Ascending aorta (tissue), 2 donors: ENCODE measurements at regions of chr6 and their contacts with region 1.

Region 1: GRCh38 chr6:3068329-3069214 is at the start of gene RIPK1:
- DNase-seq: peak; percentile 74 to 95
- H3K4me3 ChIP-seq: peak within 1 kb of the TSS; percentile 77 to 85
- H3K27ac ChIP-seq: peak within 1 kb of the TSS; percentile 96 to 98
- H3K4me1 ChIP-seq: peaks cover 8 to 19% of the 10 kb centered on the region in 2 donors
- H3K27me3 ChIP-seq: no peaks in the 10 kb centered on the region
- CTCF ChIP-seq: peak in 2 of 3 experiments; percentile 26 to 46
- total RNA-seq, gene RIPK1: 20.1 TPM

Region 2: DNA sequence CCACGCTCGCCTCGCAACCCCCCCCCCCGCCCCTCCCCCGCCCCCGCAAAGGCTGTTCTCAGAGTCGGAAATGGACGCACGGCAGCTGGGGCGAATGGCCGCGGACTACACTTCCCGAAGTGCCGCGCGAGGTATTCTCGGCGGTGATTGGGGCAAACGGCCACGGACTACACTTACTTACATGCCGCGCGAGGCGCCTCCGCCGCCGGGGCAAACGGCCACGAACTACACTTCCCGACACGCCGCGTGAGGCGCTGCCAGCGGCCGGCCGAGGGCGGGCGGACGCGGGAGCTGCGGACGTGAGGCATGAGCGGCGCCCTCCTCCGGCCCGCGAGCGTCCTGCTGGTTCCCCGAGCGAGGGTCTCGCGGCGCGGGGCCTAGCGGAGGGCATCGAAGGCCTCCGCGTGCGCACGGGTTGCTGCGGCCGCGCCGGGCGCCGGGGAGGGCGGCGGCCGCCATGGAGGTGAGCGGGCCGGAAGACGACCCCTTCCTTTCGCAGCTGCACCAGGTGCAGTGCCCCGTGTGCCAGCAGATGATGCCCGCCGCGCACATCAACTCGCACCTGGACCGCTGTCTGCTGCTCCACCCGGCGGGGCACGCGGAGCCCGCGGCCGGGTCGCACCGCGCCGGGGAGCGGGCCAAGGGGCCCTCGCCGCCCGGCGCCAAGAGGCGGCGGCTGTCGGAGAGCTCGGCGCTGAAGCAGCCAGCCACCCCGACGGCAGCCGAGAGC is 303.2 kb before region 1 on chr6 and contains the start of gene WRNIP1:
- intact Hi-C with region 1: loop called (anchors 5 kb)
- DNase-seq: peak; percentile 98 to 100
- H3K4me3 ChIP-seq: peak within 1 kb of the TSS; percentile 93
- H3K27ac ChIP-seq: peak within 1 kb of the TSS; percentile 92 to 99
- H3K4me1 ChIP-seq: peaks cover 6 to 17% of the 10 kb centered on the region in 2 donors
- H3K27me3 ChIP-seq: no peaks in the 10 kb centered on the region
- CTCF ChIP-seq: peak; percentile 47 to 93 (median 58)
- total RNA-seq, gene WRNIP1: 100 TPM

Region 3: DNA sequence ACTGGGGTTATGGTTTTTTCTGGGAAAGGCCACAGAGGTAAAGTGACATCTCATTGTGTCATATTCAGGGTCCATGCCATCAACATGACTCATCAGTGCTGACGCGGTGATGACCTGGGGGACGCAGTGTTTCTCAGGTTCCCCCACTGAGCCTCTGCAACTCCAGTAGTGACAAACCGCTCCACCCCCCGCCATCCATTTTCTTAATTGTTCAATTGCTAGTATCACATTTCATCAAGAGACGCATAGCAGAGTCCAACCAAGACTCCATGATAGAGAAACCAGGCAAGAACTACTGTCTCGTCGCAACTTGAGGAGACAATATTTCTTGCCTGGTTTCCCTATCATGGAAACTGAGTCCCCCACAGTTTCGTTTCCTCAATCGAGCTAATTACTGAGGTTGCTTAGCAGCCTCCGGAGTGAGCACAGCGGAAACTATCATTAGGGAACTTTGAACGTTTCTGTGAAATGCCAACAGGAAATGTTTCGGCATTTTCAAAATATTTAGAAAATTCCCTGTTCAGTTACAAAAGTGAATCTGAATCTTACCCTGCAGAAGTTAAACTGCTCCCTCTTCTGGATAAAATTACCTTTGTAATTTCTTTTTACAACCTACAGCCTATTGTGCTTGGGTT is 214.7 kb before region 1 on chr6:
- intact Hi-C with region 1: loop called (anchors 5 kb)
- DNase-seq: peak; percentile 55 to 92
- H3K4me3 ChIP-seq: peak overlapping the region; percentile 39 to 64
- H3K27ac ChIP-seq: peak overlapping the region; percentile 81 to 88
- H3K4me1 ChIP-seq: peaks cover 7 to 10% of the 10 kb centered on the region in 2 donors
- H3K27me3 ChIP-seq: no peaks in the 10 kb centered on the region
- CTCF ChIP-seq: peak; percentile 34 to 65 (median 43)

Region 4: DNA sequence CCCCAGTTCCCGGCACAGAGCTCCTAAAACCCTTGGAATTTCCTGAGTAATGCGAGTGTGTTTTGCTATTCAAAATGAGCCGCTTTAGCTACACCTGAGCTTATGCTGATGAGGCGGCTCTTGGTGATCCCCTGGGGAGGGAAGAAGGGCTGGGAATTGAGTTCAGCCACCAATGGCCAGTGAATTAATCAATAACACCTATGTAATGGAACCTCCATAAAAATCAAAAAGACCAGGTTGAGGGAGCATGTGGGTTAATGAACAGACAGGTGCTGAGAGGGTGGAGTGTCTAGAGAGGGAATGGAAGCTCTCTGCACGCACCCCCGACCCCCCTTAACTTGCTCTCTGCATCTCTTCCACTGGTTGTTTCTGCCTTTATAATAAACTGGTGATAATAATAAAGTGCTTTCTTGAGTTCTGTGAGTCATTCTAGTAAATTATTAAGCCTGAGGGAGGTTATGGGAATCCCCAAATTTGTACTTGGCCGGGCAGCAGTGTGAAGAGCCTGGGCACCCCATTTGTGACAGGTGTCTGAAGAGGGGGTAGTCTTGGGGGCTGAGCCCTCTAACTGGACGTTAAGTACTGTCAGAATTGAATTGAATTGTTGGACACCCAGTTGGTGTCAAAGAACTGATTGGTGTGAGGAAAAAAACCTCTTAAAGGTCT is 202.3 kb before region 1 on chr6:
- intact Hi-C with region 1: no loop called
- DNase-seq: no peak
- H3K4me3 ChIP-seq: no peak overlapping the region
- H3K27ac ChIP-seq: no peak overlapping the region
- H3K4me1 ChIP-seq: no peaks in the 10 kb centered on the region
- H3K27me3 ChIP-seq: no peaks in the 10 kb centered on the region
- CTCF ChIP-seq: no peak

Region 5: GRCh38 chr6:3118353-3119039 is 49.9 kb after region 1 on chr6 and contains the start of gene BPHL:
- intact Hi-C with region 1: loop called (anchors 1 kb)
- DNase-seq: peak; percentile 75 to 97
- H3K4me3 ChIP-seq: peak within 1 kb of the TSS; percentile 75 to 84
- H3K27ac ChIP-seq: peak within 1 kb of the TSS; percentile 81 to 93
- H3K4me1 ChIP-seq: peaks cover 0 to 5% of the 10 kb centered on the region in 2 donors
- H3K27me3 ChIP-seq: no peaks in the 10 kb centered on the region
- CTCF ChIP-seq: no peak
- total RNA-seq, gene BPHL: 7.7 TPM

Region 6: DNA sequence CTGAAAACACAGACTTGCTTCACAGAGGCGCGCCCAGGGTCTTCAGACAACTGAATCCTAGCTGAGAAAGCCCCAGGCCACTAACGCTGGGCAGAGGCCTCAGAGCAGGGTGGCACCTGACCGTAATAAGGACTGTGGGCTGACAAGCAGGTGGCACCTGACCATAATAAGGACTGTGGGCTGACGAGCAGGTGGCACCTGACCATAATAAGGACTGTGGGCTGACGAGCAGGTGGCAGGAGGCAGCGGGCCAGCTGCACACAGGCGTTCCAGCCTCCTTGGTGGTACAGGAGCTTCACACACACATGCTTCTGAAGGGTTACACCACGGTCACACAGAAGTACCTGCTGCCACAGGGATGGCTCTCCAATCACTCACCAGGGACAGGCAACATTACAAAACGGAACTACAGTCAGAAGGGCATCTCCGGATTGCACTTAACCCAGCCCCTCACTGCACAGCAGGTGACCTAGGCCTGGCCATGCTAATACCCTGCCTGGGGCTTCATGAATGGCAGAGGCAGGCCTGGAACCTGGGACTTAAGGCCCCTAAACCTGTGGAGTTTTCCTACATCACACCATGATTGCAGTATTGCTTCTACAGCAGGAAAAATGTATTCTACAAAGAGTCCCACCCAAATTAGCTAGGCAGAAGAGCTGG is 240.9 kb after region 1 on chr6:
- intact Hi-C with region 1: no loop called
- DNase-seq: no peak
- H3K4me3 ChIP-seq: no peak overlapping the region
- H3K27ac ChIP-seq: no peak overlapping the region
- H3K4me1 ChIP-seq: no peaks in the 10 kb centered on the region
- H3K27me3 ChIP-seq: no peaks in the 10 kb centered on the region
- CTCF ChIP-seq: no peak